Activated CD4-positive, alpha-beta T cell treated with anti-CD3 and anti-CD28 coated beads for 36 hours (primary cell): ENCODE measurements at regions of chr1 and their contacts with region 1.

Region 1: DNA sequence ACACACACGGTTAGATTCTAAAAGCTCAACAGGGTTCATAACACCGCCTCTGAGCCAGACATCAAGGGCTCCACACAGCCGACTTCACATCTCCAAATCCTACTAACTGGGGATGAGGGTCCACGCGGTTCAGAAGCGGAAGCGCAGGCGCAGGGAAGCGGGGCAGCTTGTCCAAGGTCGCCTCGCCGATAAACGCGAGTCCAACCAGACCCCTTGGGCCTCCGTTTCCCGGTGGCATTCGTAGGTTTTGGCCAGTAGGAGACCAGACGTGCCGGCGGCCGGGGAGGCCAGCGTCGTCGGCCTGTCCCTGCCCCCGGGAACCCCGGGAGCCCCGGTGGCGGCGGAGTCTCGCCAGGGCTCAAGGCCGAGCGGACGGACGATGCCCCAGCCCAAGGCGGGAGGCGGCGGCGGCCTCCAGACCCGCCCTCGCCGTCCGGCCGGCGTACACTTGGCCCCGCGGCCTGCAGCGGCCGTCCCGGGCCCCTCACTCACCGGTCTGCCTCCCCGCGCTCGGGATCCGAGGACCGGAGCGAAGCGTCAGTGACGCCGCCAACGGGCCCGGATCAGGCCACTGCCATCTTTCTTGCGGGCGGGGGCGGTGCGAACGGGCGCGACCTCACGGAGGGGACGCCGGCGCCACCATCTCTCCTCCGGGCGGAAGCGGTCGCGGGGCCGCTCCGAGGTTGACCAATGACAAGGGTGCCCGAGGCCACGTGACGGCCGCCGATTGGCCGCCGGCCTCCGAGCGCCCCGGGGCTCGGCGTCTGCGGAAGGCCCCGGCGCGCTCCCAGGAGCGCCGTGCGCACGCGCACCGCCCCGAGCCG is at the start of gene SDF4:
- DNase-seq: peak; percentile 98
- ATAC-seq: peak; percentile 98
- H3K4me3 Mint-ChIP-seq: peak within 1 kb of the TSS; percentile 94
- H3K27ac Mint-ChIP-seq: peak within 1 kb of the TSS; percentile 91
- H3K4me1 Mint-ChIP-seq: peaks cover 35% of the 10 kb centered on the region
- H3K27me3 Mint-ChIP-seq: no peaks in the 10 kb centered on the region
- total RNA-seq, gene SDF4: 108 to 128 TPM

Region 2: GRCh38 chr1:1033009-1033587 is 198.5 kb before region 1 on chr1:
- CTCF ChIA-PET with region 1: no interaction called
- POLR2A ChIA-PET with region 1: no interaction called
- intact Hi-C with region 1: loop called in 1 of 2 experiments (anchors 1 kb)
- DNase-seq: peak; percentile 97
- ATAC-seq: peak; percentile 95
- H3K4me3 Mint-ChIP-seq: peak overlapping the region; percentile 33
- H3K27ac Mint-ChIP-seq: no peak overlapping the region
- H3K4me1 Mint-ChIP-seq: peaks cover 5% of the 10 kb centered on the region
- H3K27me3 Mint-ChIP-seq: peaks cover 18% of the 10 kb centered on the region

Region 3: DNA sequence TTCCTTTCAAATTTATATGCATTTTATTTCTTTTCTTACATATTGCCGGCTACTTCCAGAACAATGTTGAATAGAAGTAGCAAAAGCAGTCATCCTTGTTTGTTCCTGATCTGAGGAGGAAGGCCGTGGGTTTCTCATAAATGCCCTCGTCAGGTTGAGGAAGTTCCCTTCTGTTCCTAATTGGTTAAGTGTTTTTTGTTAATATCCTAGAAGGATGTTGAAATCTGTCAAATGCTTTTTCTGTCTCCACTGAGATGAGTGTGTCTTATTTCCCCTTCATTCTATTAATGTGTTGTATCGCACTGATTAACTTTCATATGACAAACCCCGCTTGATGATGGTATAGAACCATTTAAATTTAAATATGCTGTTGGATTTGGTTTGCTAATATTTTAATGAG is 42.5 kb before region 1 on chr1:
- CTCF ChIA-PET with region 1: no interaction called
- POLR2A ChIA-PET with region 1: no interaction called
- intact Hi-C with region 1: no loop called
- DNase-seq: no peak
- ATAC-seq: no peak
- H3K4me3 Mint-ChIP-seq: no peak overlapping the region
- H3K27ac Mint-ChIP-seq: no peak overlapping the region
- H3K4me1 Mint-ChIP-seq: no peaks in the 10 kb centered on the region
- H3K27me3 Mint-ChIP-seq: no peaks in the 10 kb centered on the region

Region 4: DNA sequence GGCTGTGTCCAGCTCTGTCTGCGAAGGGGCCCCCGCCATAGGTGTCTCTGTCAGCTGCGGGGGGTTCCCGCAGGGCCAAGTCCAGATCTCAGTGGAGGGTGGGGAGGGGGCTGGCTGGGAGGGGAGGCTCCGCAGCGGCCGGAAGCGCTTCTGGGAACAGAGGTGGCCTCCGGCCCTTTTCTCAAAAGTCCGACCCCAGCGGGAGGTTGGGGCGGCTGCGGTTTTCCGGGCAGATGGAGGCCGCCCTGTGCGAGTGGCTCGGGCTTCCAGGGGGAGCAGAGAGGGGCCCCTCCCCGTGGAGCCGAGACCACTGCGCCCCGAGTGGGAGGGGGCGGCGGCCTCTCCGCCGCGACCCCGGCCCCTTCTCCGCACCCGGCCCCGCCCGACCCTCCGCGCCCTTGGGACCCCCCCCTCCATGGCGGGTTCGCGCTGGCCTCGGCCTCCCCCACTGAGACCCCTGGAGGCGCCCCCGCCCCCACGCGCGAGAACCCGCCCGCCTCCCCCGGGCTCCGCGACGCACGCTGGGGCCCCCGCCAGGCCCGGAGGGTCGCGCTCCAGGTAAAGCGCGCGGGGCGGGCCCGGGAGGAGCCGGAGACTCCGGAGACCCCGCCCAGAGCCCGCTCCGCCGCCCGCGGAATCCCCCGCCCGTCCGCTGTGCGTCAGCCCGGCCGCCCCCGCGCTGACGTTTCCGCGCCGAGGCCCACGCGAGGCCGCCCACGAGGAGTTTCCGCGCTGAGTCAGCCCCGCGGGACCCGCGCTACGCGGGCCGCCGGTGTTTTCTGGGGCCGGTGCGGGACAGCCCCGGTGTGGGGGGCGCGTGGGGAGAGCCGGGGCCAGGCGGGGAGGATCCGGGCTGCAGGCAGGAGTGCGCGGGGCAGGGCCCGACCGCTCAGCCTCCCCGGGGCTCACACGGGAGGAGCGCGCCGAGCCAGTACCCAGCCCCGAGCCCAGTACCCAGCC is 30.5 kb before region 1 on chr1:
- CTCF ChIA-PET with region 1: interaction called, 3 read pairs
- POLR2A ChIA-PET with region 1: no interaction called
- intact Hi-C with region 1: loop called in 1 of 2 experiments (anchors 1 kb)
- DNase-seq: peak; percentile 94
- ATAC-seq: peak; percentile 78
- H3K4me3 Mint-ChIP-seq: peak overlapping the region; percentile 69
- H3K27ac Mint-ChIP-seq: peak overlapping the region; percentile 85
- H3K4me1 Mint-ChIP-seq: peaks cover 12% of the 10 kb centered on the region
- H3K27me3 Mint-ChIP-seq: no peaks in the 10 kb centered on the region

Region 5: GRCh38 chr1:1273512-1274298 is 42.1 kb after region 1 on chr1 and contains the start of gene UBE2J2:
- CTCF ChIA-PET with region 1: no interaction called
- POLR2A ChIA-PET with region 1: no interaction called
- intact Hi-C with region 1: loop called in 1 of 2 experiments (anchors 1 kb)
- DNase-seq: peak; percentile 97
- ATAC-seq: peak; percentile 94
- H3K4me3 Mint-ChIP-seq: peak within 1 kb of the TSS; percentile 85
- H3K27ac Mint-ChIP-seq: peak within 1 kb of the TSS; percentile 83
- H3K4me1 Mint-ChIP-seq: peaks cover 36% of the 10 kb centered on the region
- H3K27me3 Mint-ChIP-seq: no peaks in the 10 kb centered on the region
- total RNA-seq, gene UBE2J2: 57.4 to 60.2 TPM

Region 6: GRCh38 chr1:1374929-1375662 is 143.5 kb after region 1 on chr1 and contains the start of gene AURKAIP1:
- CTCF ChIA-PET with region 1: no interaction called
- POLR2A ChIA-PET with region 1: no interaction called
- intact Hi-C with region 1: loop called in 1 of 2 experiments (anchors 1 kb)
- DNase-seq: peak; percentile 98
- ATAC-seq: peak; percentile 97
- H3K4me3 Mint-ChIP-seq: peak within 1 kb of the TSS; percentile 87
- H3K27ac Mint-ChIP-seq: peak within 1 kb of the TSS; percentile 91
- H3K4me1 Mint-ChIP-seq: peaks cover 26% of the 10 kb centered on the region
- H3K27me3 Mint-ChIP-seq: no peaks in the 10 kb centered on the region
- total RNA-seq, gene AURKAIP1: 89.5 to 117 TPM

Region 7: GRCh38 chr1:1938613-1939295 is 707.1 kb after region 1 on chr1:
- CTCF ChIA-PET with region 1: no interaction called
- POLR2A ChIA-PET with region 1: no interaction called
- intact Hi-C with region 1: no loop called
- DNase-seq: no peak
- ATAC-seq: no peak
- H3K4me3 Mint-ChIP-seq: no peak overlapping the region
- H3K27ac Mint-ChIP-seq: no peak overlapping the region
- H3K4me1 Mint-ChIP-seq: peaks cover under 1% of the 10 kb centered on the region
- H3K27me3 Mint-ChIP-seq: peaks cover 2% of the 10 kb centered on the region